Sciatic nerve (tissue), 2 donors: ENCODE measurements at regions of chr11 and their contacts with region 1.

Region 1: GRCh38 chr11:76670485-76671236 is at the start of gene LRRC32:
- DNase-seq: peak; percentile 81
- ATAC-seq: peak; percentile 39
- total RNA-seq, gene LRRC32: 192 TPM

Region 2: GRCh38 chr11:76491656-76492055 is 179.0 kb before region 1 on chr11:
- intact Hi-C with region 1: no loop called
- DNase-seq: no peak
- ATAC-seq: no peak

Region 3: DNA sequence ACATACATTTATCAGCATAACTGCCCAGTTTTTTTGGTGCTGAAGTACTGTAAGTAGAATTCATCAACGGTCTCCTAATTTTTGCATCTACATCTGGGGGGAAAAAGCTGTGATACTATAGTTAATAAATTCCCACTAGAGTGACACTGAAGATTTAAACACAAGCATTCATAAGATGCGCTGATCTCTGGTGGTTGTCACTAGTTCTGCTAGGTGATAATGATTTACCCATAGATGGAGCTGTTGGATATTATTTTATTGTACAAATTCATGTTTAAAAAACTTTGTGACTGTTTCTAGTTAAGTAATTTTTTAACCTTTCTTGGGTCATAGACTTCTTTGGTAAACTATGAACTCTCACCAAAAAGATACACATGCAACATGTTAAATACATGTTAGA is 119.3 kb before region 1 on chr11:
- intact Hi-C with region 1: loop called (anchors 10 kb)
- DNase-seq: no peak
- ATAC-seq: peak; percentile 42

Region 4: DNA sequence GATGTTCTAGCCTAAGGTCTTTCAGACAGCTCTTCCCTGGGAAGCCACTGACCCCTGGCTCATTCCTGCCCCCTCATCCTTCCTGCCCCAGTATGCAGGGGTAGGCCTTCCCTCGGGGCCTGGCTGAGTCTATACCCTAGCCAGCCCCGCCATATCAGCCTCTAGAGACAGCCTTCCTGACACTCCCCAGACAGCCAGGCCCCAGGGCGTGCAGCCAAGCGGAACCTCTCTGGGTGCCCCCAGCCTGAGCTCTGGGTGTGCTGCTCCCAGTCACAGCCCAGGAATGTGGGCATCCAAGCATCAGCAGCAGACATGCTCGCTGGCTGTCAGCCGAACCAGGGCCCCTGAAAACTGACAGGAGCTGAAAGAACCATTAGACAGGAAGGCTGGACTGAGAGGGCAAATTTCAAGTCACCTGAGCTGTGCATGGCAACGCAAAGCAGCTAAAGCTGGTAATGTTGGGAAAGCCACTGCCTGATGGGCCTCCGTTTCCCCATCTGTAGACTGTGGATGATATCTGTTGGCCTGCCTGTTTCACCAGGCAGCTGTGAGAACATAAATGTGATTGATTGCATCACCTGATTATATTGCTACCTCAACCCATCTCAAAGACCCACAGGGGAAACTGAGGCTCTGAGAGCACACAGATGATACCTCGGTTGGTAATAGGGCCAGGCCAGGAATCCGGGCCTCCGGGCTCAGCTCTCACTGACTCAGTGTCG is 93.3 kb before region 1 on chr11:
- intact Hi-C with region 1: loop called (anchors 10 kb)
- DNase-seq: no peak
- ATAC-seq: no peak